BJ (cell line): ENCODE measurements at regions of chr10 and their contacts with region 1.

Region 1: DNA sequence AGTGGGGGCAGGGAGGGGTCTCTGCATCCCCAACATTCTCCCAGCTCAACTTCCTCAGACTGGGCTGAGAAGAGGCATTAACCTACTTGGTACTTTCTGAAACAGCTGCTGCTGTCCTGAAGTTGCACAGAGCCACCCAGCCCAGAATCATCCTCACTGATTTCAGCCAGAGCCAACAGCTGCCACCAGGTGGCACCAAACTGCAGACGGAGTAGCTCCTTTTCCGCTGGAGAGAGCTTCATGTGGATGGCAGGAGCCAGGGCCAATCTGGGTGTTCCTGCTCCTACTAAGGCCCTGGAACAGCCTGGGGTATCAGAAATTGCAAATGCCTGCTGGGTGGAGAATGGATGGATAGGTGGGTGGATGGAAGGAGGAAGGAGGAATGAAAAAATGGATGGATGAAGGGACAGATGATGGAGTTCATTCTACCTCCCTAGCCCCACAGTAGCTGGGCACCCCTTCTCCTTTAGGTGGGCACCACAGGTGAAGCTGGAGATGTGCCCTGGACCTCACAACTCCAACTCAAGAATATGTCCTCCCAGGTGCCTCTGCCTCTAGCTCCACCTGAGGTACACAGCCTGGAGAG is 11.8 kb upstream of the DRGX start:
- DNase-seq: no peak
- H3K4me3 ChIP-seq: no peak overlapping the region
- H3K27me3 ChIP-seq: peaks cover 31% of the 10 kb centered on the region
- CTCF ChIP-seq: peak; percentile 96

Region 2: GRCh38 chr10:49220031-49220430 is 187.6 kb before region 1 on chr10:
- CTCF ChIA-PET with region 1: no interaction called
- POLR2A ChIA-PET with region 1: no interaction called
- DNase-seq: no peak
- H3K4me3 ChIP-seq: no peak overlapping the region
- H3K27me3 ChIP-seq: peaks cover 5% of the 10 kb centered on the region; the same call in 1 of the 2 replicates
- CTCF ChIP-seq: no peak

Region 3: DNA sequence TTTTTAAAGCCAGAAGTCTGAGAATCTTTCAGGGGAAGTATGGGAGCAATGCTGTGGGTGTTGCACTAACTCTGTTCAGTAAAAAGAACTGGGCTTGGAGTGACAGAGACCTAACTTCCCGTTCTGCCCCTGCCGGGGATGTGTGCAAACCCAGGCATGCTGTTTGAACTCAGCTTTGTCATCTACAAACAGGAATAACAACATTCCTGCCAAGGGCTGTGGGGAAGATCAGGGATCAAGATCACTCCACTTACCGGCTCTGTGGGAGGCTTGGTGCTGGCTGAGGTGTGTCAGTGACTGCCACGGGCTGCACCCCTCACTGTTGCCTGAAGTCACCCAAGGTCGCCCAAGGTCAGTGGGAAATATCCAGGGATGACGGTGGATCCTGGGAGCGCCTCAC is 11.4 kb after region 1 on chr10:
- CTCF ChIA-PET with region 1: interaction called, 36 read pairs
- POLR2A ChIA-PET with region 1: no interaction called
- DNase-seq: no peak
- H3K4me3 ChIP-seq: no peak overlapping the region
- H3K27me3 ChIP-seq: peaks cover 7% of the 10 kb centered on the region
- CTCF ChIP-seq: no peak

Region 4: DNA sequence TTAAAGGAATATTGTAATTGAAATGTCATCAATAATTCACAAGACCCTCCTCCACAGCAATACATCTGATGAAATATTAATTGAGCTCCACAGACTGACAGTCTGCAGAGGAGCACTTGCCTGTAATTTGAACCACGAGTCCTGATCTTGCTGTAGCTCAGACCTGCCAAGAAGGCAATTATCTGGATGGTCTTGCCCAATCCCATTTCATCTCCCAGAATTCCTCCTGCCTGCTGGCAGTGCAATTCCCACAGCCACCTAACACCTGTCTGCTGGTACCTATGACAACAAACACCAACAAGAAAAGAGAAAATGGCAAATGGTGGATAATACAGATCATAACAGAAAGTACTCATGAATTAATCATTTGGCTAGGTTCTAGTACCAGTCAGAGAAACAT is 92.8 kb after region 1 on chr10:
- CTCF ChIA-PET with region 1: interaction called, 11 read pairs
- POLR2A ChIA-PET with region 1: no interaction called
- DNase-seq: no peak
- H3K4me3 ChIP-seq: no peak overlapping the region
- H3K27me3 ChIP-seq: no peaks in the 10 kb centered on the region
- CTCF ChIP-seq: no peak

Region 5: DNA sequence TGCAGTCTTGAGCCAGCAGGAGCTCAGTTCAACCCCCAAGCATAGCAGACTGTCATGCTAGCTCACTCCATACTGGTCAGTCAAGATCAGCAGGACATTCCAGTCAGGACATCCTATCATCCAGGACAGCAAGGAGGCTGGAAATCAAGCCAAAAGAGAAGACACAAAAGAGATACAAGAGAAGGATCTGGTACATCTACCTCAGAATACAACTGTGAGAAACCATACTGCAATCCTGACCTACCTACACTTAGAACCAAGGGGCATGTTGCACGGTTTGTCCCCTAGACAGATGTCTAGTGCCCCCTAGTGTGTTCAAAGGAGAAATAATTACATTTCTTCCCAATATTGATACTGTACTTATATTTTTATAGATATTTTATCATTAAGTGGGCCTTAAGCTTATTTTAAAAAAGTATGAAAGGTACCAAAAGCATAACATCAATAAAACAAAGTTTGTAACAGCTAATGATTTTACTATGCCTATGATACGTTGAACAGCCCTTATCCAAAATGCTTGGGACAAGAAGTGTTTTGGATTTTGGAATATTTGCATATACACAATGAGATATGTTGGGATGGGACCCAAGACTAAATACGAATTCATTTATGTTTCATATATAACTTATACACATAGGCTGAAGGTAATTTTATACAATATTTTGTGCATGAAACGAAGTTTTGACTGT is 104.6 kb after region 1 on chr10:
- CTCF ChIA-PET with region 1: interaction called, 85 read pairs
- POLR2A ChIA-PET with region 1: no interaction called
- DNase-seq: no peak
- H3K4me3 ChIP-seq: no peak overlapping the region
- H3K27me3 ChIP-seq: no peaks in the 10 kb centered on the region
- CTCF ChIP-seq: peak; percentile 56

Region 6: GRCh38 chr10:49518982-49519578 is 111.4 kb after region 1 on chr10:
- CTCF ChIA-PET with region 1: interaction called, 85 read pairs
- POLR2A ChIA-PET with region 1: no interaction called
- DNase-seq: no peak
- H3K4me3 ChIP-seq: no peak overlapping the region
- H3K27me3 ChIP-seq: no peaks in the 10 kb centered on the region
- CTCF ChIP-seq: peak; percentile 68